GM10248 (cell line): ENCODE measurements at regions of chr1 and their contacts with region 1.

Region 1: DNA sequence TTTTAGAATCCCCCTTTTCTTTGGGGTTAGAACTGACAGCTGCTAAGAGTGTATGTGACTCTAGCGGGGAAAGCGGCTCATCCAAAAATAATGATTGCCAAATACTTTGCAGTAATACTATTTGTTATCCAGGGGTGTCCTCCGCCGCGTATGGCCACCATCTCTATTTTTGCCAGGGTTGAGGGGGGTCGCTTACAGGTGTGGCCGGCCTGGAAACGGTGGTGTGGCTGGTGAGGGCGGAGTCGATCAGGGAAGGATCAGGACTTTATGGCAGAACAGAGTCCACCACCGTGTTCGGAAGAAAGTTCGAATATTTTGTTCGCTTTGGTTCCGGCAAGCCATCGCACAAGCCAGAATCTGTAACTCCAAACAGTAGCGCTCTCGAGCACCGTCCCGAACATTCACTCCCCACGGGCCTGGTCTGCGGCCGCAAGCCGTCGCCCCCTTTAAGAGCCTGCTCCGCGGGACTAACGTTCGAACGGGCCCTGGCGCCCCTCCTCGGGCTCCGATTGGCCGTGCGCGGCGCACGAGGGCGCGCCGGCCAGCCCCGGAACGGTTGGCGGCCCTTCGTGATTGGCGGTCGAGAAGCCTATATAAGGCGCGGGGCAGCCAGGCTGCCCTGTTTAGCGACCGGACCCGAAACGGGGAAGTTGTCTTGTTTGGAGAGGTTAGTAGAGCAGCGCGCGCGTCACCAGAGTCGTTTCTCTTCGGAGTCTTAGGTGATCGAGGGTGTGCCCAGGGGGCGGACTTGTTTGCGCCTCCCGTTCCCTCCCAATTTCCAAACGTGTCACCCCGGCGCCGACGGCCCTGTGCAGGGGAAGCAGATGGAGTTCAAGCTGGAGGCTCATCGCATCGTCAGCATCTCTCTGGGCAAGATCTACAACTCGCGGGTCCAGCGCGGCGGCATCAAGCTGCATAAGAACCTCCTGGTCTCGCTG is at the start of gene IER5:
- DNase-seq: peak; percentile 94
- CTCF ChIP-seq: no peak

Region 2: DNA sequence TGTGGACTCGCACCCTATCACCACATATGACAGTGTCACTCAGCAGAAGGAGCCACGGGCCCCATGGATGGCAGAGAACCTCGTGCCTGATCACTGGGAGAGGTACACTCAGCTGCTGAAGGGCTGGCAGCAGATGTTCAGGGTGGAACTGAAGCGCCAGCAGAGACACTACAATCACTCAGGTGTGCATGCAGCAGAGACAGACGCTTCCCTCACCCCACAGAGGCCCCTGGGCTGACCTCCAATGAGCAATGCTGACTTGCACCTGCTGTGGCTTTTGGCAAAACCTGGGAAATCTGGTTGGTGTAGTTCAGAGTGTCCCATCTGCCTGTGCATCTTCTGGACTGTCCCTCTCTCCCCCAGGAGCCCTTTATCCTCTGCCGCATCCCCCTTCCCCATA is 123.8 kb before region 1 on chr1:
- CTCF ChIA-PET with region 1: no interaction called
- POLR2A ChIA-PET with region 1: no interaction called
- DNase-seq: no peak
- CTCF ChIP-seq: no peak

Region 3: DNA sequence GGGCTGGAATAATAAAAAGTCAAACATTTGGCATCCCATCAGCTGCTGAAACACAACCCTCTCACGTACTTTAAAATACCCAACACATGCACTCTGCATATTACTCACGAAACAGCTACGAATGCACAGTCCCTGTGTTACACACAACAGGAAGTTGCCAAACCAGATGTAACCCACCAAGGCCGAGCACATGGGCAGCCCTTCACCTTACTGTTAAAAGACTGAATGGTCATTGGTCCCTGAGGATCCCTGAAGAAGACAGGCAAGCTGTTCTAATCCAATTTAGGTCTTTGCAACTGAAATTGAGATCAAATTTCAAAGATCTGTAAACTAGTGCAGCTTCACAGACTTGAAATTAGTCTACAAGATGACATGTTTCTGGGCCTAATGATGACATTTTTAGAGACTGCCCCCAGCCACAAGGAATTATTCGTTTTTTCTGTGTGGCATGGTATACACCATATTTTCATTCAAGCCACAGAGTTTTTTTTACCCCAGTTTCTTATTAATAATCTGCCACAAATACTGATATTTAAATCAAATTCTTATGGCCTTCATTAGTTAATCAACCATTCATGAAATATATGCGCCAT is 25.4 kb before region 1 on chr1:
- CTCF ChIA-PET with region 1: interaction called, 4 read pairs
- POLR2A ChIA-PET with region 1: interaction called, 11 read pairs
- DNase-seq: peak; percentile 58
- CTCF ChIP-seq: no peak

Region 4: GRCh38 chr1:181099152-181100014 is 11.0 kb after region 1 on chr1:
- CTCF ChIA-PET with region 1: interaction called, 71 read pairs
- POLR2A ChIA-PET with region 1: interaction called, 110 read pairs
- DNase-seq: peak; percentile 48
- CTCF ChIP-seq: no peak

Region 5: DNA sequence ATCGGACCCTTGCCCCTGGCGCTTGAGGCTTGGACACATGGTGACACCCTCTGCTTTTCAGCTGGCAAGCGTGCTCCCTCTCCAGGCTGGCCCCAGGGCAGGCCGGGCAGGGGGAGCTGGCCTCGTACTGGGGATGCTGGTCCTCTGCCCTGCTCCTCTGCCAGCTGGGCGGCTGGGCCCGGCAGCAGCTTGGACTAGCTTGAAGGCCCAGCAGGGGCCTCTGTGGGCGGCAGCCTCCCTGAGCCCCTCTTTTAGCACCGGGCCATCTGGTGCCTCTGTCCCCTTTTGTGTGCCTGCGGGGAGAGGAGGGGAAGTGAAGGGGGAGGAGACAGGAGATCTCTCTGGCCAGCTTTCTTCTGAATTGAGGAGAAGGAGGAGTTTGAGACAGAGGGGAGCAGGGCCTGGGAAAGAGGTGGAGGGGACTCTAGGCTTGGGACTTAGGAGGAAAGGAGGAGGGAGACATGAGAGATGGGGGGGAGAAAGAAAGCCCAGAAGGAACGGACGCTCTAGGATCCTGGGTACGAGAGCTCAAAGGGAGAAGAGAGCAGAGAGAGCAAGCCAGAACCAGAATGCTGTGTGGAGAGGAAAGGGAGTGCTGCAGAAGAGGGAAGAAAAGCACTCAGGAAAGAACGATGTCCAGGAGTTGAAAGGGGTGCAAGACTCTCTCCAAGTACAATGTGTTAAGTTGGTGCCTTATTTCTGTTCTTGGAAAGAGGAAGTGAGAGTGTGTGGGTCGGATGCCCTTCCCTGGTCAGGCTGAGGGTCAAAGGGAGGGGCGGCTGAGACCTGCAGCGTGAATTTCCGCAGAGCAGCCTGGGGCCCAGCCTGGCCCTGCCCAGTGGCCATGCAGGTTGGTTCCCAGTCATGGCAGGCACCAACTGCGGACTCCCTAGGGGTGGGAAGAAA is 40.5 kb after region 1 on chr1:
- CTCF ChIA-PET with region 1: interaction called, 13 read pairs
- POLR2A ChIA-PET with region 1: interaction called, 16 read pairs
- DNase-seq: peak; percentile 70
- CTCF ChIP-seq: no peak